ENCODE measurements at regions of chr1 and their contacts with region 1.

Region 1: GRCh38 chr1:17045634-17046333 is 8.0 kb downstream of the SDHB start:
- DNase-seq: no peak
- ATAC-seq: peak; percentile 76

Region 2: DNA sequence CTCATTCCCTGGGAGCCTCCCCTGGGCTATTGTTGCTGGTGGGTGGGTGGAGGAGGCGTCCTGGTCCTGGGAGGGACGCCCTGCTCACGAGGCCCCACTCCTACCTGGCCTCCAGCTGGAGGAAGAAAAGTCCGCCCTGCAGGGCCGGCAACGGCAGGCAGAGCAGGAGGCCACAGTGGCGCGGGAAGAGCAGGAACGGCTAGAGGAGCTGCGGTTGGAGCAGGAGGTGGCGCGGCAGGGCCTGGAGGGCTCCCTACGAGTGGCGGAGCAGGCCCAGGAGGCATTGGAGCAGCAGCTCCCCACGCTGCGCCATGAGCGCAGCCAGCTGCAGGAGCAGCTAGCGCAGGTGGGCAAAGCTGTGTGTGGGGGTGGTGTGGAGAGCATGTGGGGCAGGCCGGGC is 99.1 kb before region 1 on chr1:
- intact Hi-C with region 1: loop called (anchors 2 kb)
- DNase-seq: no peak
- ATAC-seq: no peak

Region 3: GRCh38 chr1:17293681-17294425 is 248.1 kb after region 1 on chr1:
- intact Hi-C with region 1: no loop called
- DNase-seq: no peak
- ATAC-seq: no peak

Measured in left ventricle myocardium superior (tissue), 1 donor.